Heart left ventricle (tissue), 16 donors: ENCODE measurements at regions of chr10 and their contacts with region 1.

Region 1: DNA sequence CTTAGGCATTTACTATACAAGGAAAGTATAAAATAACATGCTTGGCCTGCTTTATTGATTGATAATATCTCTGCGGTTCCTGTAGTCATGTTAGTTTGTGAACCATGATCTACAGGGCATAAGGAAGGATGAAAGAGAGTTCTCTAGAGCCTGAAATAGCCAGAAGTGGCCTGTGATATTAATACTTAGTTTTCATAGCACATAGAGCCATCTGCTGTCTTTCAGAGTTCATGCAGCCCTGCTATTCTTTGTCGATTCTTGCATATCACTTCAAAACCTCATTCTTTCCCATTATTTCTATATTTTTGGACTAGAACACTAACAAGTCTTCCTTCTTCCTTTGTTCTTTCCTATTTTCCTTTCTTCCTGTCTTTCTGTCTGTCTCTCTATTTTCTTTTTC is 26.4 kb upstream of the PRKG1 start:
- DNase-seq: no peak
- ATAC-seq: peak; percentile 44 to 81 (median 78)
- H3K4me3 ChIP-seq: no peak overlapping the region
- H3K27ac ChIP-seq: peak overlapping the region in 2 of 12 donors; percentile 15 to 31
- H3K4me1 ChIP-seq: peaks cover 0 to 50% (median 8%) of the 10 kb centered on the region in 12 donors
- H3K27me3 ChIP-seq: no peaks in the 10 kb centered on the region
- CTCF ChIP-seq: peak in 9 of 12 donors; percentile 24 to 62 (median 48)
- POLR2A ChIP-seq: no peak

Region 2: GRCh38 chr10:50788951-50789945 is 258.6 kb before region 1 on chr10:
- intact Hi-C with region 1: loop called in 4 of 10 experiments (anchors 5 to 10 kb)
- DNase-seq: no peak
- ATAC-seq: peak in 3 of 4 donors; percentile 53 to 74 (median 61)
- H3K4me3 ChIP-seq: no peak overlapping the region
- H3K27ac ChIP-seq: no peak overlapping the region
- H3K4me1 ChIP-seq: peaks cover 0 to 5% (median 0%) of the 10 kb centered on the region in 12 donors
- H3K27me3 ChIP-seq: no peaks in the 10 kb centered on the region
- CTCF ChIP-seq: peak in 11 of 12 donors; percentile 16 to 50 (median 38)
- POLR2A ChIP-seq: no peak

Region 3: DNA sequence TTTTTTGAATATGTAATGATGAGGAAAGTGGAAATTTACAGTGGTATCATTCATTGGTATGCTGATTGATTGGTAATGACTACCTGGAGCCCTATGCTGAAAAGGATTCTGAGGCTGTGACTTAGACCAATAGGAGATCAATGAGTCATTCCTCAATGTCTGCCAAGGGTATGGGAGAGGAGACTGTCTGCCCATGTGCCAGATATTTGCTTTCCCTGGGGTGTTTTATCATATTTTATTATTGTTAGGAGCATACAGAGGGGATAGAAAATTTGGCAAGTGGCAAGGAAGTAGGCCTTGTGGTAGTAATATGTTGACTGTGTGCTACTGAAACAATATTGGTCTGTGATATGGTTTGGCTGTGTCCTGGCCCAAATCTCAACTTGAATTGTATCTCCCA is 253.4 kb before region 1 on chr10:
- intact Hi-C with region 1: loop called in 4 of 10 experiments (anchors 5 to 10 kb)
- DNase-seq: no peak
- ATAC-seq: no peak
- H3K4me3 ChIP-seq: no peak overlapping the region
- H3K27ac ChIP-seq: no peak overlapping the region
- H3K4me1 ChIP-seq: no peaks in the 10 kb centered on the region
- H3K27me3 ChIP-seq: peaks cover 0 to 8% (median 0%) of the 10 kb centered on the region in 9 donors
- CTCF ChIP-seq: no peak
- POLR2A ChIP-seq: no peak

Region 4: DNA sequence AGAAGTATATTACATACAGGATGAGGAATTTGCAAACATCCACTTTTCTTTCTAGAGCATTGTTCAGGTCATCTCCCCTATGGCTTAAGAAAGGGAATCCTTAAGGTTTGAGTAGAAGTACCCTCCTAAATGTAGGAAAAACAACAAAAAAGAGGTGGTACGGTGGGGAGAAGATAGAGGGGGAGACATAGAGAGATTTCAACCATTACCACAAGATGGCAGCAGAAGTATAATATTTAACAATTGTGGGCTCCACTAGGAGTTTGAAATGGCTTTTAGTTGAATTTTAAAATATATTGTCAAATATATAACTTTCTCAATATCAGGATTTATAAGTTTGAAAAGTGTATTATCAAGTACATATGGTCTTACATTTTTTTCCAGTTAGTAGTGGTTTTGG is 46.3 kb before region 1 on chr10:
- intact Hi-C with region 1: loop called in 3 of 10 experiments (anchors 5 kb)
- DNase-seq: no peak
- ATAC-seq: peak in 3 of 4 donors; percentile 55 to 70 (median 67)
- H3K4me3 ChIP-seq: no peak overlapping the region
- H3K27ac ChIP-seq: peak overlapping the region in 5 of 12 donors; percentile 17 to 53 (median 26)
- H3K4me1 ChIP-seq: peaks cover 0 to 63% (median 6%) of the 10 kb centered on the region in 12 donors
- H3K27me3 ChIP-seq: no peaks in the 10 kb centered on the region
- CTCF ChIP-seq: peak; percentile 38 to 75 (median 59)
- POLR2A ChIP-seq: no peak

Region 5: DNA sequence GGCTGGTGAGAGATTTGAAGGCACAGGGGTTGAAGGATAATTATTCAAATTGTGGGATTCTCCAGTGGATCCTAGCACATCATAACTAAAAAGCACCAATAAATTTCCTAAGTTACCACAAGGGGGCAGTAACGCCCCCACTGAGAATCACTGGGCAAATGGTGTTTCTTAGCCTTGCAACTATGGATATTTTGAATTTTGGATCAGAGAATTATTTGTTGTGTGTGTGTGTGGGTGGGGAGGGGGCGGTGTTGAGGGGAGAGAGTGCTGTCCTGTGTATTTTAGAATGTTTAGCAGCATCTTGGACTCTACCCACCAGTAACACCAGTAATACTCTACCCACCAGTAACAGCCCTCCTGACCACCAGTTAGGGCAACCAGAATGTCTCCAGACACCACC is 36.9 kb before region 1 on chr10:
- intact Hi-C with region 1: loop called in 5 of 10 experiments (anchors 5 kb)
- DNase-seq: no peak
- ATAC-seq: peak in 1 of 4 donors; percentile 50
- H3K4me3 ChIP-seq: no peak overlapping the region
- H3K27ac ChIP-seq: no peak overlapping the region
- H3K4me1 ChIP-seq: peaks cover 0 to 20% (median 5%) of the 10 kb centered on the region in 12 donors
- H3K27me3 ChIP-seq: no peaks in the 10 kb centered on the region
- CTCF ChIP-seq: peak; percentile 64 to 80 (median 72)
- POLR2A ChIP-seq: no peak